MCF 10A (cell line): ENCODE measurements at regions of chr4 and their contacts with region 1.

Region 1: GRCh38 chr4:122854447-122855352 is 28.1 kb downstream of the FGF2 start:
- DNase-seq: no peak
- H3K4me3 Mint-ChIP-seq: peak overlapping the region; percentile 67
- H3K27ac Mint-ChIP-seq: peak overlapping the region; percentile 98
- H3K4me1 Mint-ChIP-seq: peaks cover 22% of the 10 kb centered on the region
- H3K27me3 Mint-ChIP-seq: no peaks in the 10 kb centered on the region
- CTCF ChIP-seq: no peak

Region 2: DNA sequence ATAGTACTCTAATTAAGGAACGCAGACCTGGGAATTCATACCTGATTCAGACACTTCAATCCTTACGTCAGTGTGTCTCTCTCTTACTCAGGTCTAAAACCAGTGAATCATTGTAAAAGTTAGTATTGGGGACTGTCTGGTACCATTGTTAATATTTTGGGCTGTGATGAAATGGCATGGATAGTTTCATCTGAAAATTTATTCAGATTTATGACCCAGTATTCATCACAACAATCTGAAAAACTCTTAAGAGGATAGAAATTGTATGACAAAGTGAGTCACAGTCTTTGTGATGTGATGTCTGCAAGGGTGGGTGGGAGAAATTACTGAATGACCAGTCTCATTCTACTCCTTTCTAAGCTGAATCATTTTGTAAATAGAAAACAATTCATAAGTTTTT is 17.8 kb before region 1 on chr4:
- CTCF ChIA-PET with region 1: interaction called, 3 read pairs
- POLR2A ChIA-PET with region 1: interaction called, 27 read pairs
- intact Hi-C with region 1: no loop called
- DNase-seq: no peak
- H3K4me3 Mint-ChIP-seq: no peak overlapping the region
- H3K27ac Mint-ChIP-seq: no peak overlapping the region
- H3K4me1 Mint-ChIP-seq: peaks cover 16% of the 10 kb centered on the region
- H3K27me3 Mint-ChIP-seq: no peaks in the 10 kb centered on the region
- CTCF ChIP-seq: no peak

Region 3: DNA sequence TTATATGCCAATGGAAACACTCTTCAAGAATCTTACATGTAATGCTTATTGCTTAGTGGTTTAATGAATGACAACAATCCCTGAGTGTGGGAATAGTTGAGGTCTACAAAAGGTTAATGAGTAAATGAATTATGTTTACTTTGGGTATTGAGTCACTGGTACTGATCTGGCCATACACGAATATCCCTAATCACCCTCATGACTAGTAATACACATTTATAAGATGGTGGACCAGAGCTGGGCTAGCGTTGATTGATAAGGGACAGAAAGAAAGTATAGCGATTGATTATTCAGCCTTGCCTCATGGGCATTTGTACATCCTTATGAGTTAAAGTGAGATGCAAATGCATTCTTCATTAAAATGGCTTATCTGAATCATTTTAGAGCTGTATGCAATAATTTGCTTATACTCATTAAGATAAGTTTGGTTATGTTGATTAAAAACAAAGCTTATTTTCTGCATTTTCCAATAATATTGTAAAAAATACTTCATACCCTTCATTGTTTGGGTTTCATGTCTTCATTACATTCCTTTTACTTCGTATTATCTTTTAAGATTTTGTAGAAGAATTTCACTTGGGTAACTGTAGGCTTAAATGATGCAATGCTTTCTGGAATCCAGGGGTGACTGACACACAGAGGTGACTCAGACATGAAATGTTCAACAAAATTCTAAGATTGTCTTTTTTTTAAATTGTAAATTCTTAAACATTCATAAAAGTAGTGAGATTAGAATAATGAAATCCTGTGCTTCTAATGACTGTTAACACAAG is 19.3 kb after region 1 on chr4:
- CTCF ChIA-PET with region 1: interaction called, 9 read pairs
- POLR2A ChIA-PET with region 1: interaction called, 21 read pairs
- intact Hi-C with region 1: no loop called
- DNase-seq: peak; percentile 73
- H3K4me3 Mint-ChIP-seq: no peak overlapping the region
- H3K27ac Mint-ChIP-seq: peak overlapping the region; percentile 82
- H3K4me1 Mint-ChIP-seq: peaks cover 47% of the 10 kb centered on the region
- H3K27me3 Mint-ChIP-seq: no peaks in the 10 kb centered on the region
- CTCF ChIP-seq: no peak